ENCODE measurements at regions of chr12 and their contacts with region 1.

Region 1: GRCh38 chr12:104855599-104855998 is 102.5 kb downstream of the SLC41A2 start:
- DNase-seq: no peak
- CTCF ChIP-seq: no peak

Region 2: DNA sequence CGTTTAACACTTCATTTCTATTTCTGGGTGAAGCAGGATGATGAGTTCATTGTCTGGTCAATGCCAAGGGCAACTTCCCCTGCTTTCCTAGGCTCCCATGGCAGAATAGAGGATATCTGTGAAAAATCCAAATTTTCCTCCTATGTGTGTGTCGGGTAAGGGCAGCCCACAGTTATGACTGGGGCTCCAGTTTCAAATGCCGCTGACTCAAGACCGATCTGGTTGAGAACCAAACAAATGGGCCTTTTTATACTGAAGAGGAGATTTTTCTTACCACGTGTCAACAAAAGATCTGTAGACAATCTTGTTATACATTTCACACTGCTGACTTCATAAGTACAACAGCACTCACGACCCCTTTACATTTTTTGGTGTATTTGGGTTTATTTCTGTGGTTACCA is 278.0 kb before region 1 on chr12:
- CTCF ChIA-PET with region 1: no interaction called
- POLR2A ChIA-PET with region 1: interaction called, 15 read pairs
- DNase-seq: no peak
- CTCF ChIP-seq: no peak

Region 3: GRCh38 chr12:104825408-104825807 is 30.2 kb before region 1 on chr12:
- CTCF ChIA-PET with region 1: no interaction called
- POLR2A ChIA-PET with region 1: no interaction called
- DNase-seq: no peak
- CTCF ChIP-seq: no peak

Region 4: DNA sequence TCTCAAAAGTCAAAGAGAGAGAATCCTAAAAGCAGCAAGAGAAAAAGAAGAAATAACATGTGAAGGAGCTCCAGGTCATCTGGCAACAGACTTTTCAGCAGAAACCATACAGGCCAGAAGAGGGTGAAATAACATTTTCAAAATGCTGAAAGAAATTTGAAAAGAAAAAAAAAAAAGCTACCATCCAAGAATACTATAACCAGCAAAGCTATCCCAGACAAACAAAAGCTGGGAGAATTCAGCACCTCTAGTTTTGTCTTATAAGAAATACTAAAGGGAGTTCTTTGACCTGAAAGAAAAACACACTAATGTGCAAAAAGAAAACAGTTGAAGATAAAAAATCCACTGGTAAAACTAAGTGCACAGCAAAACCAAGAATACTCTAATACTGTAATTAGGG is 65.7 kb after region 1 on chr12:
- CTCF ChIA-PET with region 1: no interaction called
- POLR2A ChIA-PET with region 1: no interaction called
- DNase-seq: no peak
- CTCF ChIP-seq: no peak